ENCODE measurements at regions of chr6 and their contacts with region 1.

Region 1: GRCh38 chr6:121430514-121431460 is 4.7 kb upstream of the GJA1 start:
- DNase-seq: peak; percentile 29
- ATAC-seq: peak; percentile 46; the same call in 1 of the 2 replicates
- H3K4me3 ChIP-seq: no peak overlapping the region
- H3K27ac ChIP-seq: no peak overlapping the region
- H3K4me1 ChIP-seq: no peaks in the 10 kb centered on the region
- H3K27me3 ChIP-seq: no peaks in the 10 kb centered on the region
- CTCF ChIP-seq: peak; percentile 29 to 82 (median 74)
- POLR2A ChIP-seq: no peak
- RAD21 ChIP-seq: peak; percentile 92

Region 2: DNA sequence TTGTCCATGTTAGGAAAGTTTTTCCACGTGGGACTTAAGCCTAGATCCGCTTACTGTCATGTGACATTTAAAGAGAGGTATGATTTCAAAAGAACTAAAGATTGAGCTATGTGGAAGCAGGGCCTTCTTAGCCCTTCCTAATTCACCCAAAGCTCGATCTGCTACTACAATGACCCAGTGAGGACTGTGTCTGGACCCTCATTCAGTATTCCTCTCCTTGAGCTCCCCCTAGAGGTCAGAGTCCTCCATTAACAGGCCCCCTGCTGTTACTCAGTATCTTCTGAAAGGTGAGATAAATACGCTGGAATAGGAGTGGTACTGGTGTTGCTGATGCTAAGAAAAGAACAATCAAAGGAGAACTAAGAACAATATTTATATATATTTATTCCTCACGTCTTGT is 418.7 kb after region 1 on chr6:
- CTCF ChIA-PET with region 1: interaction called, 25 read pairs
- POLR2A ChIA-PET with region 1: no interaction called
- RAD21 ChIA-PET with region 1: interaction called, 3 to 6 read pairs
- intact Hi-C with region 1: loop called (anchors 1 kb)
- DNase-seq: peak; percentile 53
- ATAC-seq: peak; percentile 93
- H3K4me3 ChIP-seq: no peak overlapping the region
- H3K27ac ChIP-seq: no peak overlapping the region
- H3K4me1 ChIP-seq: no peaks in the 10 kb centered on the region
- H3K27me3 ChIP-seq: no peaks in the 10 kb centered on the region
- CTCF ChIP-seq: peak; percentile 75 to 87 (median 77); a peak in 5 of 6 replicates
- POLR2A ChIP-seq: no peak
- RAD21 ChIP-seq: peak; percentile 92

Region 3: GRCh38 chr6:122033539-122034181 is 602.9 kb after region 1 on chr6:
- CTCF ChIA-PET with region 1: interaction called, 3 read pairs
- POLR2A ChIA-PET with region 1: no interaction called
- RAD21 ChIA-PET with region 1: no interaction called
- intact Hi-C with region 1: loop called (anchors 1 kb)
- DNase-seq: peak; percentile 49
- ATAC-seq: peak; percentile 91
- H3K4me3 ChIP-seq: no peak overlapping the region
- H3K27ac ChIP-seq: no peak overlapping the region
- H3K4me1 ChIP-seq: peaks cover 3 to 13% of the 10 kb centered on the region in 2 experiments; a peak in 3 of 4 replicates
- H3K27me3 ChIP-seq: no peaks in the 10 kb centered on the region
- CTCF ChIP-seq: peak; percentile 42 to 80 (median 60); a peak in 4 of 6 replicates
- POLR2A ChIP-seq: no peak
- RAD21 ChIP-seq: peak; percentile 89

Region 4: DNA sequence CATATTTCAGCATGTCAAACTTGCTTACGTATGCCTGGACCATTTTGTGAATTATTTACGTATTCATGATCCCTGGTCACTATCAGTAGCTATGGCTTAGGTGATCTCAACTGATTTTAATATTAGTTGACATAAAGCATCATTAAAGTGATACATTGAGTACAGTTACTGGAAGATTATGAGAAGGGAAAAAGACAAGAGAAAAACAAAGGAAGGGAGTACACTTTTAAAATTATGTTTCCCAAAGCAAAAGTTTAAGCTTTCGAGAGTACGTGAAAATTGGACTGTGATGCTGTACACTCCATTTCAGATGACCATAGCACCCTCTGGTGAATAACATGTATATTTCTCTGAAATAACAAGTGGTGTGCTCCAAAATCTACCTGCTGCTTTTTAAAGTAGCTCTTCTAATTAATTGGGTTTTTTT is 753.6 kb after region 1 on chr6:
- CTCF ChIA-PET with region 1: interaction called, 7 read pairs
- POLR2A ChIA-PET with region 1: no interaction called
- RAD21 ChIA-PET with region 1: no interaction called
- intact Hi-C with region 1: loop called (anchors 1 kb)
- DNase-seq: peak; percentile 19
- ATAC-seq: peak; percentile 79
- H3K4me3 ChIP-seq: no peak overlapping the region
- H3K27ac ChIP-seq: no peak overlapping the region
- H3K4me1 ChIP-seq: no peaks in the 10 kb centered on the region
- H3K27me3 ChIP-seq: no peaks in the 10 kb centered on the region
- CTCF ChIP-seq: peak; percentile 12 to 48 (median 40); a peak in 4 of 6 replicates
- POLR2A ChIP-seq: no peak
- RAD21 ChIP-seq: peak; percentile 71

Region 5: DNA sequence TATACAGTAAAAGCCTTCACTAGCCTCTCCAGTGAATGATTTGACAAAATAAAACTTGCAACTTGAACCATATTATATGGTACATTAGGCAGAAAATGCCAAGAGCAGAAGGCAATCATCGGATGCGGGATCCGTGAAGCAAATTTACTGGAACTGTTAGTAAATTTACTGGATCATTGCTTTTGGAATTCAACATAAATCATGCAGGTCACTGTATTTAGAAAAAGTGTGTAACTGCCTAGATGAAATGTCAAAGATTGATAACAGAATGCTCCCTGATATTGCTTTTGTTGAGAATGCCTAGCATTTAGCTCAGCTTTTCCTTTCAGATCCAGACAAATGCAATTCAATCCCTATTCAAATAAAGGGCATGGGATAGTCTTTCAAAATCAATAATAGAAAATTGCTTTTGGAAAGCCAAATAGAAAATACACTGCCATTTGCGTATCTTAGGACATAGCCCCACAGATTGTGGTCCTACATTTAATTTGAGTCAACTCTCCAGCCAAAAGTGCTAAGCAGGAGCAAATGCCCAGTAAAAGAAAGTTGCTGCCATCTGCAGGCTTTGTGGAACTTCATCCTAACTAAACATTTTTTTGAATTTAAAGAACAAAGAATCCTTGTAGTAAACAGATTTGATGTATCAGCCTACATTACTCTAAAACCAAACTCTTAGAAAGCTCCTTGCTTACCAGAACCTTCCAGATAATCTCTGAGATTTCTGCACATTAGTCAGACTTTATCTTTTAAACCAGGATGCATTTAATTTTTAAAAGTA is 859.2 kb after region 1 on chr6:
- CTCF ChIA-PET with region 1: no interaction called
- POLR2A ChIA-PET with region 1: no interaction called
- RAD21 ChIA-PET with region 1: no interaction called
- intact Hi-C with region 1: loop called (anchors 5 kb)
- DNase-seq: peak; percentile 13
- ATAC-seq: peak; percentile 44; the same call in 1 of the 2 replicates
- H3K4me3 ChIP-seq: no peak overlapping the region
- H3K27ac ChIP-seq: no peak overlapping the region
- H3K4me1 ChIP-seq: no peaks in the 10 kb centered on the region
- H3K27me3 ChIP-seq: no peaks in the 10 kb centered on the region
- CTCF ChIP-seq: peak; percentile 25 to 46 (median 37); a peak in 4 of 6 replicates
- POLR2A ChIP-seq: no peak
- RAD21 ChIP-seq: peak; percentile 71

Region 6: DNA sequence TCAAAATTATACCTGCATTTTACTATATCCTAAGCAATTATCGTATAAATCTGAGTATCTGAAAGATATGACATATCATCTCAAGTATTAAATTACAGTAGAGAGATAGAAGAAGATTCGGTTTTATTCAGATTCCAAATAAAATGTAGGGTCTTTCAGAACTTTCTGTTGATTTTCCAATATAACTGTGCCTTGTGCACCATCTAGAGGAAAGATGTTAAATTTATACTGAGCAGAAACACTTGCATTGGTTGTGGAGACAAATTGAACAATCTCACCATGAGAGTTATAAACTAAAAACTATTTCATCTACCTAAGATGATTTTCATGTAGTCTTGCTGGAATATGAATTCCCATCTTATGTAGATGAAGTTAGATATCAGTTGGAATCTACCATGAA is 941.9 kb after region 1 on chr6:
- CTCF ChIA-PET with region 1: no interaction called
- POLR2A ChIA-PET with region 1: no interaction called
- RAD21 ChIA-PET with region 1: no interaction called
- intact Hi-C with region 1: loop called (anchors 5 kb)
- DNase-seq: no peak
- ATAC-seq: peak; percentile 61; the same call in 1 of the 2 replicates
- H3K4me3 ChIP-seq: no peak overlapping the region
- H3K27ac ChIP-seq: no peak overlapping the region
- H3K4me1 ChIP-seq: no peaks in the 10 kb centered on the region
- H3K27me3 ChIP-seq: no peaks in the 10 kb centered on the region
- CTCF ChIP-seq: peak; percentile 23 to 57 (median 31); a peak in 4 of 6 replicates
- POLR2A ChIP-seq: no peak
- RAD21 ChIP-seq: peak; percentile 69

Region 7: DNA sequence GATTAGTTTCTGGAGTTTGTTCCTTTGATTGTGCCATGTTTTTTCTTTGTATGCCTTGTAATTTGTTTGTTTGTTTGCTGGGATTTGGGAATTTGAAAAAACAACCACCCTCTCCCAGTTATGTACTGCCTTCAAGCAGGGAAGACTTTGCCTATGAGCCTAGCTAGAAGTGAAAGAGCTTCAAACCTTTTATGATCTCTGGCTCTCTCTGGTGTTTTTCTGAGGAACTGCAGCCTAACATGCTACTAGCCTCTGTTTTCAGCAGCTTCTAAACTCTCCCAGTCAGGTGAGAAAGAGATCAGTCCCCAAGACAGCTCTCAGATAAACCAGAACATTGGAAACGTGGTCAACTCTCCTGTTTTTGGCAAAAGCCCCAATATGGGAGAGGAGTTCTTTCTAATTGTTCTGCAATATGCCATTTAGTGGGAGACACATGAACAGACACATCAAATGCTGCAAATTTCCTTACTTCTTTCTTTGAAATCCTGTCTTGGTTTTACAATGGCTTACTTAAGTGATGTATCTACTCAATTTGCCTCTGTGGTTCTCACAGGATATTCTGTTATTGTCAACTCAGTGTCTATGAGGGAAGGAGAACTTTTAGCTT is 1099.8 kb after region 1 on chr6:
- CTCF ChIA-PET with region 1: no interaction called
- POLR2A ChIA-PET with region 1: no interaction called
- RAD21 ChIA-PET with region 1: no interaction called
- intact Hi-C with region 1: loop called (anchors 5 kb)
- DNase-seq: peak; percentile 62
- ATAC-seq: peak; percentile 98
- H3K4me3 ChIP-seq: no peak overlapping the region
- H3K27ac ChIP-seq: no peak overlapping the region
- H3K4me1 ChIP-seq: no peaks in the 10 kb centered on the region
- H3K27me3 ChIP-seq: no peaks in the 10 kb centered on the region
- CTCF ChIP-seq: peak; percentile 71 to 90 (median 90)
- POLR2A ChIP-seq: no peak
- RAD21 ChIP-seq: peak; percentile 84

Measured in HCT116 (cell line).